AG04449 (cell line): ENCODE measurements at regions of chr4 and their contacts with region 1.

Region 1: GRCh38 chr4:75724066-75724866 is at the start of gene USO1:
- DNase-seq: peak; percentile 93
- H3K4me3 ChIP-seq: peak within 1 kb of the TSS; percentile 99
- CTCF ChIP-seq: peak; percentile 73

Region 2: GRCh38 chr4:75673027-75673958 is 51.0 kb before region 1 on chr4 and contains the start of gene G3BP2:
- CTCF ChIA-PET with region 1: interaction called, 35 read pairs
- POLR2A ChIA-PET with region 1: interaction called, 7 read pairs
- DNase-seq: peak; percentile 82
- H3K4me3 ChIP-seq: peak within 1 kb of the TSS; percentile 90
- CTCF ChIP-seq: no peak

Region 3: DNA sequence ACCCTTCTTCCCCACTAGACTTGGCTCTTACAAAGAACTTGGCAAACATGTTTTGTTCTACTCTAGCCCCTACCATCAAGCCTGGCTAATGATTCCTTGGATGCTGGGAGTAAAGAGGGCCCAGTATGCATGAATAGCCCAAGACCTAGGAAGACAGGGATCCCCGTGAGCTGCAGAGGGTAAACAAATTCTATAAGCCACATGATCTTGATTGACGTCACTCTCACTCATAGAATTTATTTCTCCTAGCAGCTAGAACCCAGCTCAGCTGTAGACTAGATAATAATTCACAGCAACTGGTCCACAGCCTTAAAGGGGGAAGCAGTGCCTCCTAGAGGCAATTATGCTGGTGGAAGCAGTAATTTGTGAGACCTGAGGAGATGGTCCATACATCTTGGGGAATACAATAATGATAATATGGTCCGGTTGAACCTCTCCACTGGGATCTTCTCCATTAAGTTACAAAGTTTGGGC is 16.0 kb before region 1 on chr4:
- CTCF ChIA-PET with region 1: interaction called, 63 read pairs
- POLR2A ChIA-PET with region 1: interaction called, 18 read pairs
- DNase-seq: no peak
- H3K4me3 ChIP-seq: no peak overlapping the region
- CTCF ChIP-seq: no peak

Region 4: GRCh38 chr4:75752637-75753036 is 28.4 kb after region 1 on chr4:
- CTCF ChIA-PET with region 1: interaction called, 20 read pairs
- POLR2A ChIA-PET with region 1: interaction called, 3 read pairs
- DNase-seq: no peak
- H3K4me3 ChIP-seq: no peak overlapping the region
- CTCF ChIP-seq: no peak

Region 5: DNA sequence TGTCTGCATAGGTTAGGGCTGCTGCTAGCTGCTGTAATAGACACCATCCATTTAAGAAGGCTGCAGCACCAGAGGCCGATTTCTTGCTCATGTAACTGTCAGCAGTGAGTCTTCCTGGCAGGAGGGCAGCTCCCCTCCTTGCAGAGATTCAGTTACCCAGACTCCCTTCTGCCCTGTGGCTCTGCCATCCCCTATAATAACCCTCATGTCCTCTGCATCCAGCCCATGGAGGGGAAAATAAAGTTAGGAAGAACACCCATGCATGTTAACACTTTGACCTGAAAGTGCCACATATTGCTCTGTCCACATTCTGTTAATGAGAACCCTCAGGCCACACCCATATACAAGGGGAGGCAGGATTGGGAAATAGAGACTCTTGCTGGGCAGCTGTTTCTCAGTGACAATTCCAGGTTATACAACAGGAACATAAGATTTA is 587.6 kb after region 1 on chr4:
- CTCF ChIA-PET with region 1: no interaction called
- POLR2A ChIA-PET with region 1: no interaction called
- DNase-seq: no peak
- H3K4me3 ChIP-seq: no peak overlapping the region
- CTCF ChIP-seq: no peak